ENCODE measurements at regions of chr6 and their contacts with region 1.

Region 1: DNA sequence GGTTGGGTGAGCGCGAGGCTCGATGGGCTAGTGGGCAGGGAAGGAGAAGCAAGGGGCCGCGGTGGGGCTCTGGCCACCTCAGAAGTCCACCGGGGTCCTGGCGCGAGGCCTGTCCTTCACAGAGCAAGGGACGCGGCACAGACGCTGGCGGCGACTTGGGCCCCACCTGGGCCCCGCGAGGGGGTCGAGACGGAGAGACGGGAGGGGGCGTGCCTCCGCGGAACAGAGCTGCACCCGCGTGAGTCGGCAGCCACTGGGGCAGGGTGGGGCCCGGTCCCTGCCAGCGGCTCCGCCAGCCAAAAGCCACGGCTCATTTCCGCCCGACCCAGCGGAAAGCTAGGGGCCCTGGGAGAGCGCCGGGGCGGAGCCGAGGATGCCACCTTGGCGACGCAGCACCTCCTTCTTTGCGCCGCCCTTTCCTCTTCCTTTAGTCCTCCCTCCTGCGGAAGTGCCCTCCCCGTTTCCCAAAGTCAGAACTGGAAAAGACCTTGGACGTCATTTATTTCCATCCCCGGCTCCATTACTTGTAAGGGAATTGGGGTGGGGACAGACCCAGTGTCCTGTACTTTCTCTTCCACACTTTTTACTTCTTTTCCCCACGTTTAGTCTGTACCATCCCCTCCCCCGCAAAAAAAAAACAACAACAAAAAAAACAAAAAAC is at the start of gene CUL7:
- DNase-seq: peak; percentile 78 to 95 (median 89)
- ATAC-seq: peak; percentile 99
- H3K4me3 ChIP-seq: peak within 1 kb of the TSS; percentile 93
- H3K4me3 Mint-ChIP-seq: peak within 1 kb of the TSS; percentile 98
- H3K27ac ChIP-seq: peak within 1 kb of the TSS; percentile 76 to 84
- H3K27ac Mint-ChIP-seq: peak within 1 kb of the TSS; percentile 96
- H3K4me1 ChIP-seq: peaks cover 45% of the 10 kb centered on the region
- H3K4me1 Mint-ChIP-seq: peaks cover 59% of the 10 kb centered on the region
- H3K27me3 ChIP-seq: no peaks in the 10 kb centered on the region
- H3K27me3 Mint-ChIP-seq: no peaks in the 10 kb centered on the region
- CTCF ChIP-seq: no peak
- total RNA-seq, gene CUL7: 5.9 to 6.9 TPM

Region 2: GRCh38 chr6:43013843-43014433 is 39.7 kb before region 1 on chr6 and contains the starts of genes KLHDC3 and MEA1:
- CTCF ChIA-PET with region 1: interaction called, 7 read pairs
- POLR2A ChIA-PET with region 1: interaction called, 37 read pairs
- intact Hi-C with region 1: no loop called
- DNase-seq: peak; percentile 95 to 100 (median 98)
- ATAC-seq: peak; percentile 91
- H3K4me3 ChIP-seq: peak within 1 kb of the TSS; percentile 86
- H3K4me3 Mint-ChIP-seq: peak within 1 kb of the TSS; percentile 88
- H3K27ac ChIP-seq: peak within 1 kb of the TSS; percentile 51 to 59
- H3K27ac Mint-ChIP-seq: peak within 1 kb of the TSS; percentile 81
- H3K4me1 ChIP-seq: peaks cover 55% of the 10 kb centered on the region
- H3K4me1 Mint-ChIP-seq: peaks cover 59% of the 10 kb centered on the region
- H3K27me3 ChIP-seq: no peaks in the 10 kb centered on the region
- H3K27me3 Mint-ChIP-seq: no peaks in the 10 kb centered on the region
- CTCF ChIP-seq: no peak
- total RNA-seq, gene KLHDC3: 21.0 to 22.3 TPM
- total RNA-seq, gene MEA1: 13.6 to 17.0 TPM

Region 3: DNA sequence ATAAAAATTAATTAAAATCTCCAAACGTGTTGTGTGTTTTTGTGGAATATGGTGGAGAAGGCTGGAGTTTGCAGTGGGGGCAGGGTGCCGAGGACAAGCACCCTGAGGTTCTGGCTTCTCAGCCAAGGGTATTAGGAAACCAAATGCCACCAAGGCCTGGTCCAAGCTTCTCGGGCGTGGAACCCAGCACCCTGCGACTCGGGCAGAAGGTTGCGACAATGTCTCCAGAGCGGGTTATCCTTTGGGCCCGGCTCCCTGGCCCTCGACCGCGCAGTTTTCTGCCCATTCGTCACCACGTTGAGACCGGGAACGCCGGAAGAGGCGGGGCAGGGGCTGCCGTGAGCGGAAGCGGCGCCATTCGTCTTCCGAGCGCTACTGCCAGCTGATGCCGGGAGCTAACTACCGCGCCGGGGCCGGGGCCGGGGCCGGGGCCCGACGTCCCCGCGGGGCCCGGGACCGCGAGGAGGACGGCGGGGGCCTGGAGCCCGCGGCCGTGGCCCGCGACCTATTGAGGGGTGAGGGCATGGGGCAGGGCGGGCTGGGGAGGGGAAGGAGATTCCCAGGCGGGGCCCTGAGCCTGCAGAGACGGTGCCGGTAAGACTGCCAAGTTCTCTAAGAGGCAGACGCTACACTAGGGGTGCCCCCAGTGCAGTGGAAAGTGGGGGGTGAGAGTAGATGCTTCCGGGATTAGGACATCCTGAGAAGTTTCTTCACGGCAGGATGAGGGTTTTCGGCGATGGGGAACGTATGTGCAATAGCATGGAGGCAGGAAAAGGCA is 32.2 kb before region 1 on chr6 and contains the start of gene RRP36:
- CTCF ChIA-PET with region 1: interaction called, 4 read pairs
- POLR2A ChIA-PET with region 1: interaction called, 37 read pairs
- intact Hi-C with region 1: no loop called
- DNase-seq: peak; percentile 33 to 80 (median 63)
- ATAC-seq: peak; percentile 73
- H3K4me3 ChIP-seq: peak within 1 kb of the TSS; percentile 84
- H3K4me3 Mint-ChIP-seq: peak within 1 kb of the TSS; percentile 98
- H3K27ac ChIP-seq: peak within 1 kb of the TSS; percentile 57 to 62
- H3K27ac Mint-ChIP-seq: peak within 1 kb of the TSS; percentile 83
- H3K4me1 ChIP-seq: peaks cover 52% of the 10 kb centered on the region
- H3K4me1 Mint-ChIP-seq: peaks cover 38% of the 10 kb centered on the region
- H3K27me3 ChIP-seq: no peaks in the 10 kb centered on the region
- H3K27me3 Mint-ChIP-seq: no peaks in the 10 kb centered on the region
- CTCF ChIP-seq: no peak
- total RNA-seq, gene RRP36: 17.2 to 17.7 TPM

Measured in CD4-positive, alpha-beta T cell (primary cell).